Psoas muscle (tissue), 8 donors: ENCODE measurements at regions of chr1 and their contacts with region 1.

Region 1: DNA sequence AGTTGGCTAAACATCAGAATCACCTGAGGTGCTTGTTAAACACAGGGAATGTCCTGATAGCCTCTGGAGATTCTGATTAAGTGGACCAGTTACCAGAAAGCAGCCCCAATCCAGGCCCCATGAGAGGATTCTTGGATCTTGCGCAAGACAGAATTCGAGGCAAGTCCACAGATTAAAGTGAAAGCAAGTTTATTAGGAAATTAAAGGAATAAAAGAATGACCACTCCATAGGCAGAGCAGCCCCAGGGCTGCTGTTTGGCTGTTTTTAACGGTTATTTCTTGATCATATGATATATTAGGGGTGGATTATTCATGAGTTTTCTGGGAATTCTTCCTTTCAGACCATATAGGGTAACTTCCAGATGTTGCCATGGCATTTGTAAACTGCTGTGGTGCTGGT is 176.2 kb downstream of the ROR1 start:
- DNase-seq: peak in 1 of 2 donors; percentile 22
- ATAC-seq: no peak
- H3K4me3 ChIP-seq: no peak overlapping the region
- H3K27ac ChIP-seq: no peak overlapping the region
- H3K4me1 ChIP-seq: peaks cover 11% of the 10 kb centered on the region
- H3K27me3 ChIP-seq: no peaks in the 10 kb centered on the region
- CTCF ChIP-seq: no peak

Region 2: DNA sequence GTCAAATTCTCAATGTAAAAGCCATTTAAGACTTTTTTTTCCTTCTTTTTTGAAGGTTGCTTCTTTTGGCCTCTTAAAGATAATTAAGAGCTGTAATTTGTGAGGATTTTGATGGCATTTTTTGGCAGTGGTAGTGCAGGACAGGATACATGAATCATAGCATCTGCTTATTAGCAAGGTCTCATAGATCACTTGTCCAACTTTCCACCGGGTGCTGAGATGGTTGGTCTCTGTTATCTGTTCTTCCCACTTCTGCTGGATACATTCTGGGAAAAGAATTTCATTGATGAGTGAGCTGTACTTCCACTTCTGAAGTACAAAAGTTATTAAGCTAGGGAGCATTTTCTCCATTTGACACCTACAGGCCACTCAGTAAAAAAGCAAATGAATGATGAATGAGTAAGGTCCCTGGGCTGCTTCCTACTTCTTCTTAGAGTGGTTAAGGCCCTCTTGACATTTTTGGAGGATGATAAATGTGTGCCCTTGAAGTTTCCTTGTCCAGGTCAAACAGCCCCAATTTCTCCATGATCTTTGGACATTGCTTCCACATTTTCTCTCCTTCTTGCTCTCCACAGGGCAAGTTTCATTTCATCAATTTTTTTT is 75.6 kb before region 1 on chr1:
- intact Hi-C with region 1: loop called in 1 of 2 experiments (anchors 5 kb)
- DNase-seq: no peak
- ATAC-seq: no peak
- H3K4me3 ChIP-seq: no peak overlapping the region
- H3K27ac ChIP-seq: no peak overlapping the region
- H3K4me1 ChIP-seq: no peaks in the 10 kb centered on the region
- H3K27me3 ChIP-seq: no peaks in the 10 kb centered on the region
- CTCF ChIP-seq: no peak